ENCODE measurements at regions of chr12 and their contacts with region 1.

Region 1: GRCh38 chr12:55955800-55956508 is 9.9 kb downstream of the PMEL start:
- DNase-seq: peak; percentile 43
- H3K4me3 Mint-ChIP-seq: no peak overlapping the region
- H3K27ac Mint-ChIP-seq: peak overlapping the region; percentile 7
- H3K4me1 Mint-ChIP-seq: peaks cover 3% of the 10 kb centered on the region
- H3K27me3 Mint-ChIP-seq: no peaks in the 10 kb centered on the region

Region 2: GRCh38 chr12:55966408-55967281 is 10.7 kb after region 1 on chr12 and contains the start of gene CDK2:
- CTCF ChIA-PET with region 1: interaction called, 3 read pairs
- POLR2A ChIA-PET with region 1: interaction called, 18 read pairs
- DNase-seq: peak; percentile 91
- H3K4me3 Mint-ChIP-seq: peak within 1 kb of the TSS; percentile 94
- H3K27ac Mint-ChIP-seq: peak within 1 kb of the TSS; percentile 78
- H3K4me1 Mint-ChIP-seq: peaks cover 43% of the 10 kb centered on the region
- H3K27me3 Mint-ChIP-seq: no peaks in the 10 kb centered on the region
- total RNA-seq, gene CDK2: 88.9 to 98.9 TPM

Region 3: GRCh38 chr12:56258057-56258819 is 302.3 kb after region 1 on chr12 and contains the start of gene ANKRD52:
- CTCF ChIA-PET with region 1: no interaction called
- POLR2A ChIA-PET with region 1: no interaction called
- DNase-seq: peak; percentile 80
- H3K4me3 Mint-ChIP-seq: peak within 1 kb of the TSS; percentile 91
- H3K27ac Mint-ChIP-seq: peak within 1 kb of the TSS; percentile 76
- H3K4me1 Mint-ChIP-seq: peaks cover 22% of the 10 kb centered on the region
- H3K27me3 Mint-ChIP-seq: no peaks in the 10 kb centered on the region
- total RNA-seq, gene ANKRD52: 46.4 to 50.1 TPM